PC-3 (cell line): ENCODE measurements at regions of chr10 and their contacts with region 1.

Region 1: GRCh38 chr10:37495415-37495814 is 362.0 kb downstream of the ZNF248 start:
- DNase-seq: peak; percentile 94
- ATAC-seq: peak; percentile 94
- H3K4me3 ChIP-seq: no peak overlapping the region
- H3K27ac ChIP-seq: no peak overlapping the region
- H3K4me1 ChIP-seq: peaks cover 2% of the 10 kb centered on the region
- H3K27me3 ChIP-seq: no peaks in the 10 kb centered on the region
- CTCF ChIP-seq: peak; percentile 98

Region 2: GRCh38 chr10:35613597-35614226 is 1881.7 kb before region 1 on chr10:
- CTCF ChIA-PET with region 1: interaction called, 15 read pairs
- POLR2A ChIA-PET with region 1: no interaction called
- intact Hi-C with region 1: no loop called
- DNase-seq: peak; percentile 92
- ATAC-seq: peak; percentile 96
- H3K4me3 ChIP-seq: no peak overlapping the region
- H3K27ac ChIP-seq: no peak overlapping the region
- H3K4me1 ChIP-seq: peaks cover 8% of the 10 kb centered on the region
- H3K27me3 ChIP-seq: no peaks in the 10 kb centered on the region
- CTCF ChIP-seq: peak; percentile 100

Region 3: GRCh38 chr10:36946598-36946997 is 548.8 kb before region 1 on chr10:
- CTCF ChIA-PET with region 1: interaction called, 11 read pairs
- POLR2A ChIA-PET with region 1: no interaction called
- intact Hi-C with region 1: no loop called
- DNase-seq: peak; percentile 58
- ATAC-seq: peak; percentile 92
- H3K4me3 ChIP-seq: no peak overlapping the region
- H3K27ac ChIP-seq: no peak overlapping the region
- H3K4me1 ChIP-seq: no peaks in the 10 kb centered on the region; the same call in 1 of the 2 replicates
- H3K27me3 ChIP-seq: peaks cover 26% of the 10 kb centered on the region
- CTCF ChIP-seq: no peak

Region 4: DNA sequence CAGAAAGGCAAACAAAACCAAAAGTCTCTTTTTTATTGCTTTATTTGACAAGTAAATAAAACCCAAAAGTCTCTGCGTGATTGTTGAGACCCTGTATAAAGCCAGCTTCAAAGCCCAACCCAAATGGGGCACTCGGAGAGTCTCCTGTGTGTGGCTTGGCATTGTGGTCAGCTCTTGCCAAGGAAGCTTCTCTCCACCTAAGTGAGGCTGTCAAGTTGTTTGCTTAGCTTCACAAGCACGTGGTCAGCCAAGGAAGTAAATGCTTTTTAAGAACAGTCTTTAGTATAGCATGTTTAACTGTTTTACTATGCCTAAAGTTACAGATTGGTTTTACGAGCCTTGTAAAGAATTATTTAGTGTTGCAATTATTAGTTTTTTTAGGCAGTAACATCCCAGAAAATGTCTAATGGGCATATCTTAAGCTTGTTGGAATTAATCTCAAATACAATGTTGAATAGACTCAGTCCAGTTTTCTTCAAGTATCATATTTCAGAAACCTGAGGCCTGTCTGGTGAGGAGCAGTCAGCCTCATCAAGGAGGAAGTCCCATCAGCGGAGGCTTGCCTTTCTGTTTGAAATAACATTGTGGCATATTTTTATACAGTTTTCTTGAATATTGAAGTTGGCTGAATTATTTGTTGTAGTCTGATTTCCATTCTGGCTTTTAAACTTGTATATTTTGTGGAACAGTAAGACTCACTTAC is 225.7 kb before region 1 on chr10:
- CTCF ChIA-PET with region 1: interaction called, 10 read pairs
- POLR2A ChIA-PET with region 1: no interaction called
- intact Hi-C with region 1: loop called (anchors 5 kb)
- DNase-seq: peak; percentile 45
- ATAC-seq: peak; percentile 80
- H3K4me3 ChIP-seq: no peak overlapping the region
- H3K27ac ChIP-seq: no peak overlapping the region
- H3K4me1 ChIP-seq: 0 out of 2 replicates have a peak, but pooled peaks cover 6% of the 10 kb centered on the region
- H3K27me3 ChIP-seq: no peaks in the 10 kb centered on the region
- CTCF ChIP-seq: no peak

Region 5: GRCh38 chr10:37563107-37563714 is 67.8 kb after region 1 on chr10:
- CTCF ChIA-PET with region 1: no interaction called
- POLR2A ChIA-PET with region 1: no interaction called
- intact Hi-C with region 1: loop called (anchors 5 kb)
- DNase-seq: peak; percentile 36
- ATAC-seq: no peak
- H3K4me3 ChIP-seq: no peak overlapping the region
- H3K27ac ChIP-seq: no peak overlapping the region
- H3K4me1 ChIP-seq: peaks cover 9% of the 10 kb centered on the region
- H3K27me3 ChIP-seq: no peaks in the 10 kb centered on the region
- CTCF ChIP-seq: no peak

Region 6: GRCh38 chr10:37576154-37576553 is 80.7 kb after region 1 on chr10:
- CTCF ChIA-PET with region 1: no interaction called
- POLR2A ChIA-PET with region 1: no interaction called
- intact Hi-C with region 1: no loop called
- DNase-seq: peak; percentile 79
- ATAC-seq: peak; percentile 90
- H3K4me3 ChIP-seq: no peak overlapping the region
- H3K27ac ChIP-seq: no peak overlapping the region
- H3K4me1 ChIP-seq: peaks cover 13% of the 10 kb centered on the region
- H3K27me3 ChIP-seq: no peaks in the 10 kb centered on the region
- CTCF ChIP-seq: no peak

Region 7: GRCh38 chr10:37816290-37816689 is 320.9 kb after region 1 on chr10:
- CTCF ChIA-PET with region 1: no interaction called
- POLR2A ChIA-PET with region 1: no interaction called
- intact Hi-C with region 1: no loop called
- DNase-seq: no peak
- ATAC-seq: no peak
- H3K4me3 ChIP-seq: no peak overlapping the region
- H3K27ac ChIP-seq: no peak overlapping the region
- H3K4me1 ChIP-seq: no peaks in the 10 kb centered on the region
- H3K27me3 ChIP-seq: no peaks in the 10 kb centered on the region
- CTCF ChIP-seq: no peak